K562 (cell line): ENCODE measurements at regions of chrX and their contacts with region 1.

Region 1: GRCh38 chrX:153319295-153320046 is 2.1 kb downstream of the PNMA6F start:
- DNase-seq: no peak
- ATAC-seq: no peak
- H3K4me3 ChIP-seq: no peak overlapping the region
- H3K27ac ChIP-seq: no peak overlapping the region
- H3K4me1 ChIP-seq: peaks cover 0 to 11% of the 10 kb centered on the region in 2 experiments; a peak in 2 of 5 replicates
- H3K27me3 ChIP-seq: no peaks in the 10 kb centered on the region; a peak in 1 of 5 replicates
- CTCF ChIP-seq: no peak
- EP300 ChIP-seq: no peak
- POLR2A ChIP-seq: no peak
- RAD21 ChIP-seq: no peak

Region 2: GRCh38 chrX:152989292-152989658 is 330.2 kb before region 1 on chrX:
- CTCF ChIA-PET with region 1: no interaction called
- POLR2A ChIA-PET with region 1: no interaction called
- in situ Hi-C with region 1: loop called (anchors 10 kb)
- intact Hi-C with region 1: no loop called
- DNase-seq: no peak
- ATAC-seq: no peak
- H3K4me3 ChIP-seq: no peak overlapping the region
- H3K27ac ChIP-seq: no peak overlapping the region
- H3K4me1 ChIP-seq: peaks cover 4 to 12% of the 10 kb centered on the region in 2 experiments; a peak in 3 of 5 replicates
- H3K27me3 ChIP-seq: 0 out of 5 replicates have a peak, but pooled peaks cover 0 to 5% of the 10 kb centered on the region in 2 experiments
- CTCF ChIP-seq: no peak
- EP300 ChIP-seq: no peak
- POLR2A ChIP-seq: no peak
- RAD21 ChIP-seq: no peak

Region 3: DNA sequence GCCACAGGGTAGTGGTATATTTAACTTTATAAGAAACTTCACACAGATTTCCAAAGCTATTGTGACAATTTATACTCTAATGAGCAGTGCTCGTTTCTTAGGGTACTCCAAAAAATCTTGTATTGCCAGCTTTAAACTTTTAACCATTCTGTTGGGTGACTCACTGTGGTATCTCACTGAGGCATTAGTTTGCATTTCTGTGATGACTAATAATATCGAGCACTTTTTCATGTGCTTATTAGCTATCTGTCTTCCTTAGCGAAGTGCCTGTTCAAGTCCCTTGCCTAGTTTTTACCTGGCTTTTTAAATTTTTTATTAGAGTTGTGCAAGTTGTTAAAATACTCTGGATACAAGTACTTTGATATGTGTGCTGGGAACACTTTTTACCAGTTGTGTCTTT is 257.7 kb before region 1 on chrX:
- CTCF ChIA-PET with region 1: no interaction called
- POLR2A ChIA-PET with region 1: no interaction called
- in situ Hi-C with region 1: no loop called
- intact Hi-C with region 1: loop called (anchors 5 kb)
- DNase-seq: peak in 2 of 4 experiments; percentile 9 to 19
- ATAC-seq: no peak
- H3K4me3 ChIP-seq: no peak overlapping the region
- H3K27ac ChIP-seq: no peak overlapping the region
- H3K4me1 ChIP-seq: peaks cover 7 to 18% of the 10 kb centered on the region in 2 experiments; a peak in 4 of 5 replicates
- H3K27me3 ChIP-seq: no peaks in the 10 kb centered on the region
- CTCF ChIP-seq: no peak
- EP300 ChIP-seq: no peak
- POLR2A ChIP-seq: no peak
- RAD21 ChIP-seq: no peak

Region 4: GRCh38 chrX:153226344-153227185 is 92.9 kb before region 1 on chrX:
- CTCF ChIA-PET with region 1: no interaction called
- POLR2A ChIA-PET with region 1: no interaction called
- in situ Hi-C with region 1: no loop called
- intact Hi-C with region 1: no loop called
- DNase-seq: peak; percentile 93 to 96 (median 94)
- ATAC-seq: peak; percentile 99
- H3K4me3 ChIP-seq: peak overlapping the region; percentile 40
- H3K27ac ChIP-seq: peak overlapping the region; percentile 76
- H3K4me1 ChIP-seq: peaks cover 6 to 8% of the 10 kb centered on the region in 2 experiments; a peak in 4 of 5 replicates
- H3K27me3 ChIP-seq: no peaks in the 10 kb centered on the region
- CTCF ChIP-seq: no peak
- EP300 ChIP-seq: no peak
- POLR2A ChIP-seq: 0 out of 2 replicates have a peak, but pooled peaks have one; percentile 26
- RAD21 ChIP-seq: no peak

Region 5: GRCh38 chrX:153405426-153405825 is 86.0 kb after region 1 on chrX:
- CTCF ChIA-PET with region 1: no interaction called
- POLR2A ChIA-PET with region 1: no interaction called
- in situ Hi-C with region 1: no loop called
- intact Hi-C with region 1: no loop called
- DNase-seq: no peak
- ATAC-seq: no peak
- H3K4me3 ChIP-seq: no peak overlapping the region
- H3K27ac ChIP-seq: no peak overlapping the region
- H3K4me1 ChIP-seq: peaks cover 4 to 29% of the 10 kb centered on the region in 2 experiments; a peak in 4 of 5 replicates
- H3K27me3 ChIP-seq: no peaks in the 10 kb centered on the region
- CTCF ChIP-seq: no peak
- EP300 ChIP-seq: no peak
- POLR2A ChIP-seq: no peak
- RAD21 ChIP-seq: no peak

Region 6: GRCh38 chrX:153947009-153947769 is 627.7 kb after region 1 on chrX:
- CTCF ChIA-PET with region 1: no interaction called
- POLR2A ChIA-PET with region 1: no interaction called
- in situ Hi-C with region 1: no loop called
- intact Hi-C with region 1: no loop called
- DNase-seq: peak; percentile 62 to 90 (median 72)
- ATAC-seq: peak; percentile 92
- H3K4me3 ChIP-seq: no peak overlapping the region
- H3K27ac ChIP-seq: peak overlapping the region; percentile 53; the same call in 2 of the 3 replicates
- H3K4me1 ChIP-seq: peaks cover 8 to 80% of the 10 kb centered on the region in 2 experiments; a peak in 4 of 5 replicates
- H3K27me3 ChIP-seq: no peaks in the 10 kb centered on the region
- CTCF ChIP-seq: peak; percentile 97 to 99 (median 99)
- EP300 ChIP-seq: no peak
- POLR2A ChIP-seq: peak; percentile 56; the same call in 1 of the 2 replicates
- RAD21 ChIP-seq: peak; percentile 74